Transverse colon (tissue), 4 donors: ENCODE measurements at regions of chr10 and their contacts with region 1.

Region 1: DNA sequence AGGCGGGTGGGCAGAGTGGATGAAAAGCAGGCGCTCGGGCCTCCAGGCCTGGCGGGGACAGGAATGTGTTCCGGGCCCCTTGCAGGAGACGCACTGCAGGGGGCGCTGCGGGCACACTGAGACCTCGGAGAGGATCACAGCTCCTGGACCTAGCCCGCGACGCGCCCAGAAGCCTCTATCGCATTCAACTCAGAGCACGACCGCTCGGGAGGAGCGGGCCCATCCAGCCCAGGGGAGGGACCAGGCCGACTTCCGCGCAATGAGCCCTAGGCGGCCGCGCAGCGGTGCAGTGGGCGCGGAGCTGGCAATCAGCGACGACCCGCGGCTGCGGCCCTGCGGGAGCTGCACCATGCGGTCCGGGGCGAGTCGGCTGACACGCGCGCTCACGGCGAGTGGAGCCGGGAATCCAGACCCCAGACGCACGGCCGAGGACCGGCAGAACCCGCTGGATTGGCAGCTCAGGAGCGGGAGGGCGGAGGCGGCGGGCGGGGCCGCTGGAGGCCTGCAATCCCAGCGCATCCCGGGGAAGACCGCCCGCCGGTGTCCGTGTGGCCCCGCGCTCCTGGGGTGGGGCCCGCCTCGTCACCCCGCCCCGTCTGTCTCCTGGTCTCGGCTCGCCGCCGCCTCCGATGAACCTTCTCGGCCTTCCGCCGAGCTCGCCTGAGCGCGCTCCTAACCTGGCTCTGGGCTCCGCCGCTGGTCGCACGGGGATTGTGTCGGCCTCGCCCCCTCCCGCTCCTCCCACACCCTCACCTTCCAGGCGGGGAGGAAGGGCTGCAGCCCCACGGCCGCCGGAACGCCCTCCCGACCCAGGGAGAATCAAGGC is 33.5 kb upstream of the GRID1 start:
- DNase-seq: peak; percentile 97
- H3K4me3 ChIP-seq: peak overlapping the region; percentile 33 to 71 (median 60)
- H3K27ac ChIP-seq: peak overlapping the region; percentile 80 to 94 (median 87)
- H3K4me1 ChIP-seq: peaks cover 9 to 30% (median 26%) of the 10 kb centered on the region in 4 donors
- H3K27me3 ChIP-seq: peaks cover 24% of the 10 kb centered on the region
- CTCF ChIP-seq: peak; percentile 90 to 95 (median 93)
- EP300 ChIP-seq: no peak
- POLR2A ChIP-seq: peak; percentile 7

Region 2: GRCh38 chr10:86440874-86441843 is 41.1 kb after region 1 on chr10:
- in situ Hi-C with region 1: no loop called
- intact Hi-C with region 1: no loop called
- DNase-seq: no peak
- H3K4me3 ChIP-seq: no peak overlapping the region
- H3K27ac ChIP-seq: no peak overlapping the region
- H3K4me1 ChIP-seq: peaks cover 0 to 12% (median 4%) of the 10 kb centered on the region in 4 donors
- H3K27me3 ChIP-seq: no peaks in the 10 kb centered on the region
- CTCF ChIP-seq: no peak
- EP300 ChIP-seq: no peak
- POLR2A ChIP-seq: no peak

Region 3: DNA sequence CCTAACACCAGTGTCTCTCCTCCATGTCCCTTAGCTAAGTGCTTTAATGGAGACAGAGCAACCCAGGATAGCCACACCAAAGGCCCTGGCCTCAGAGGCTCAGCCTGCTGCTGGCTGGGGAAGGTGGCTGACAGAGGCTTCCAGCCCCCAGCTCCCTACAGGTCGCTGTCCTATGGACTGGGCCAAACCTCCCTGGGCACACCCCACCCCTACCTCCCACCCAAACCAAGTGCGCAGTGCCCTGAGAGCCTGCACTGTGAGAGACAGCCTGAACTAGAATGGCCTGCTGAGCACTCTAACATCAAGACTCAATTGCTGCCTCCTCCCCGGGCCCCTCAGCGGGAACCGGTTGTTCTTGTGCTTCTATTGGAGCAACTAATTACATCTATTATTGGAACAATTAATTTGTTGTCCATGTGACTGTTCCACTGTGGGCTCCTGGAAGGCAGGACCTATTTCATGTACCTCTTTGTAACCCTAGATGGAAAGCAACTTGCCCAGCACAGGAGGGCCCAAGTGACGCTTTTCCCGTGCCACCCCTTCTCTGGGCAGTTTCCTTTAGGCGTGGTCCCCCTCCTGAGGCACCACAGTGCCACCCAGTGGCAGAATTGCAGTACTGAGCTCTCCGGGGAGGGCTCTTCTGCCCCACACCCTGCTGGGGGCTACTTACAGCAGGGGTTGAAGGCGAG is 185.1 kb after region 1 on chr10:
- in situ Hi-C with region 1: loop called (anchors 5 to 25 kb)
- intact Hi-C with region 1: loop called (anchors 5 kb)
- DNase-seq: peak; percentile 76
- H3K4me3 ChIP-seq: no peak overlapping the region
- H3K27ac ChIP-seq: no peak overlapping the region
- H3K4me1 ChIP-seq: peaks cover 0 to 7% (median 5%) of the 10 kb centered on the region in 4 donors
- H3K27me3 ChIP-seq: no peaks in the 10 kb centered on the region
- CTCF ChIP-seq: peak; percentile 93 to 96 (median 95)
- EP300 ChIP-seq: no peak
- POLR2A ChIP-seq: no peak

Region 4: GRCh38 chr10:86671985-86672710 is 272.1 kb after region 1 on chr10:
- in situ Hi-C with region 1: no loop called
- intact Hi-C with region 1: loop called (anchors 2 kb)
- DNase-seq: no peak
- H3K4me3 ChIP-seq: no peak overlapping the region
- H3K27ac ChIP-seq: peak overlapping the region; percentile 73 to 90 (median 82)
- H3K4me1 ChIP-seq: peaks cover 28 to 52% (median 43%) of the 10 kb centered on the region in 4 donors
- H3K27me3 ChIP-seq: no peaks in the 10 kb centered on the region
- CTCF ChIP-seq: no peak
- EP300 ChIP-seq: no peak
- POLR2A ChIP-seq: no peak